ENCODE measurements at regions of chr5 and their contacts with region 1.

Region 1: DNA sequence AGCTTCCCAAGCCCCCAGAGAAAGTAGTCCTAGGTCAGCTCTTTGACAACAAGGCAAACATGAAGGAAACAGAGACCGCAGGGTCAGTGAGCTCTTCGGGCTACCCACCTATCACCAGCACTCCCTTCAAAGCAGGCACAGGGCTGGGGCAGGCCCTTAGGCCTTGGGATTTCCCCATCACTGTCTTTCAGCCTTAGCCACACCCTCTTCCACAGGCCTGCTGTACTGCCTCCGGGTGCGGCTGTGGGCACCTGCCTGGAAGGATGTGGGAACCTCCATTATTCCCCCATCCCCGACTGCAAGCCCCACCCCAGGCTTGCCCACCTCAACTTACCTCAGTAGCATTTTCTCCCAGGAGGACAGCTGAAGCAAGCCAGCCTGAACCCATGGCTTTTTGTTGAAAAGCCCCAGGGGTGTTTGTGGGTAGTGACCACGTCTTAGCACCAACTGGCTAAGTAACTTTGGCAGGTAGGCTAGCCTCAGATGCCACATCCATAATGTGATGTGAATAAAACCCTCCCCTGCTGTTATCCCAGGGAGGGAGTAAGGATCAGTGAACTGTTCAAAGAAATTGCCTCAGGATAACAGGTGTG is 100.2 kb downstream of the PIK3R1 start:
- DNase-seq: no peak
- ATAC-seq: no peak
- H3K4me3 ChIP-seq: no peak overlapping the region
- H3K27ac ChIP-seq: no peak overlapping the region
- H3K4me1 ChIP-seq: peaks cover 5% of the 10 kb centered on the region; the same call in 1 of the 2 replicates
- H3K27me3 ChIP-seq: no peaks in the 10 kb centered on the region
- CTCF ChIP-seq: no peak
- POLR2A ChIP-seq: no peak
- RAD21 ChIP-seq: no peak

Region 2: DNA sequence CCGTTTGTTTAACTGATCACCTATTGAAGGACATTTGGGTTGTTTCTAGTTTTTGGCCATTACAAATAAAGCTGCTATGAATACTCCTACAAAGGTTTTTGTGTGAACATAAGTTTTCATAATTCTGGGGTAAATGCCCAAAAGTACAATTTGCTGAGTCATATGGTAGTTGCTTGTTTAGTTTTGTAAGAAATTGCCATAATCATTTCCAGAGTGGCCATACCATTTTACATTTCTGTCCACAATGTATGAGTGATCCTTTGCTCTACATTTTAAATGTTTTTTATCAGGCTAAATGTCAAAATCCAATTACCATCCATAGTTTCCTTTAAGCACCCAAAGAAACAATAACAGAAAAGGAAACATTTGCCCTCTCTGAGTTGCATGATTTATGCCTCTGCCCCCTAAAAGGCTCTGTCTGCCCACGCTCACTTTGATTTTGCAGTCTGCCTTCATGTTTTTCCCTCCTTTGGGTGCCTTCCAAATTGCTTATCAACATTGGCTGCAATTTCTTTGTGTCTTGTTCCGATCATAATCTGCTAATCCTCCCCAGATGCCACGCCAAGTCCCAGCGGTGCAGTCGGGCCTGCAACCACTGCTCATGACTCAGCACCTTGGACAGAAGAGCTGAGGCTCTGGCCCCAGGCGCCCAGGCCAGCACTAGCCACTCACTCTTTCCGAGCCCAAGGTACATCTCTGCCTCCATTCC is 238.9 kb after region 1 on chr5:
- CTCF ChIA-PET with region 1: no interaction called
- POLR2A ChIA-PET with region 1: no interaction called
- dilution Hi-C with region 1: no loop called
- in situ Hi-C with region 1: no loop called
- intact Hi-C with region 1: loop called (anchors 10 kb)
- DNase-seq: peak; percentile 59
- ATAC-seq: peak; percentile 80
- H3K4me3 ChIP-seq: no peak overlapping the region
- H3K27ac ChIP-seq: no peak overlapping the region
- H3K4me1 ChIP-seq: peaks cover 9% of the 10 kb centered on the region
- H3K27me3 ChIP-seq: no peaks in the 10 kb centered on the region
- CTCF ChIP-seq: no peak
- POLR2A ChIP-seq: no peak
- RAD21 ChIP-seq: no peak

Measured in IMR-90 (cell line).